B cell (primary cell): ENCODE measurements at regions of chr17 and their contacts with region 1.

Region 1: GRCh38 chr17:31541559-31541958 is 150.1 kb downstream of the RAB11FIP4 start:
- DNase-seq: no peak
- ATAC-seq: no peak
- H3K4me3 ChIP-seq: no peak overlapping the region
- H3K4me3 Mint-ChIP-seq: no peak overlapping the region
- H3K27ac ChIP-seq: no peak overlapping the region
- H3K27ac Mint-ChIP-seq: peak overlapping the region; percentile 74
- H3K4me1 ChIP-seq: peaks cover 42 to 48% of the 10 kb centered on the region in 2 donors
- H3K4me1 Mint-ChIP-seq: peaks cover 52% of the 10 kb centered on the region
- H3K27me3 ChIP-seq: no peaks in the 10 kb centered on the region
- H3K27me3 Mint-ChIP-seq: no peaks in the 10 kb centered on the region
- CTCF ChIP-seq: no peak

Region 2: DNA sequence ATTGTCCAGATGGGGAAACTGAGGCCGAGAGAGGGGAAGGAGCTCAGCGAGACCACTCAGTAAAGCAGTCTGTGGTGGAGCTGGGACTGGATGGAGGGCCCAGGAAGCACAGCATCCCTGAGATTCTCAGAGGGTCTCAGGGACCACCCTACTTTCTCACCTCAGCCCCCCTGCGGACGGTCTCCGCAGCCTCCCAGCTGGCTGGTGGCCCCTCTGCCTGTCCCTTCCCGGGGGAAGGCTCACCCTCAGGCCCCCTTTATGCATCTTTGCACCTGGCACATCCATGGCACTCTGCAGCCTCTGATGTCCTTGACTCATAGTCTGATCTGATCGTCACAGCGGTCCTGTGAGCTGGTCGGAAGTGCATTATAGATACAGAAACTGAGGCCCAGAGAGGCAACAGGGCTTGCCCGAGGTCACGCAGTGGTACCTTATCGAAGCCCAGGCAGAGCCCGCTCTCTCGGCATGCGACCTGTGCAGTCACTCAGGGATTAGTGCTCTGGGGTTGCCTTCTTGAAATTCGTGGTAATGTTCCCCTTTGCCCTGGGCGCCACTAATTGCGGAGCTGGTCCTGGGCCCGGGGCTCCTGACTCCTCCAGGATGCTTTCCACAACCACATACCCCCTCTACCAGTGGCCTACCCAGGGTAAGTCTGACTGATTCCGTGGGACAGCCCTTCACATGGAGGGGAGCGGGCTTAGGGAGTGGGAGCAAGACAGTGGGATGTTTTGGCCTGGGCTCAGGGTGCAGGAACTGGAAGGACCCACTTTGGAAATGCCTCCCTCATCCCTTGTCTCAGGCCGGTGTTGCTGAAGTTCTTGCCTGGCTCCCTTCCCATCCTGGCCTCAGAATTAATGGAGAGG is 125.7 kb before region 1 on chr17:
- CTCF ChIA-PET with region 1: no interaction called
- POLR2A ChIA-PET with region 1: interaction called, 11 read pairs
- intact Hi-C with region 1: no loop called
- DNase-seq: no peak
- ATAC-seq: no peak
- H3K4me3 ChIP-seq: no peak overlapping the region
- H3K4me3 Mint-ChIP-seq: no peak overlapping the region
- H3K27ac ChIP-seq: no peak overlapping the region
- H3K27ac Mint-ChIP-seq: no peak overlapping the region
- H3K4me1 ChIP-seq: peaks cover 9% of the 10 kb centered on the region in 2 donors
- H3K4me1 Mint-ChIP-seq: peaks cover 10% of the 10 kb centered on the region
- H3K27me3 ChIP-seq: no peaks in the 10 kb centered on the region
- H3K27me3 Mint-ChIP-seq: peaks cover 5% of the 10 kb centered on the region
- CTCF ChIP-seq: no peak

Region 3: GRCh38 chr17:31596382-31597323 is 55.1 kb after region 1 on chr17:
- CTCF ChIA-PET with region 1: no interaction called
- POLR2A ChIA-PET with region 1: no interaction called
- intact Hi-C with region 1: loop called (anchors 1 kb)
- DNase-seq: peak; percentile 73
- ATAC-seq: peak; percentile 99
- H3K4me3 ChIP-seq: no peak overlapping the region
- H3K4me3 Mint-ChIP-seq: peak overlapping the region; percentile 32
- H3K27ac ChIP-seq: peak overlapping the region; percentile 24 to 52
- H3K27ac Mint-ChIP-seq: peak overlapping the region; percentile 81
- H3K4me1 ChIP-seq: peaks cover 19 to 24% of the 10 kb centered on the region in 2 donors
- H3K4me1 Mint-ChIP-seq: peaks cover 34% of the 10 kb centered on the region
- H3K27me3 ChIP-seq: no peaks in the 10 kb centered on the region
- H3K27me3 Mint-ChIP-seq: no peaks in the 10 kb centered on the region
- CTCF ChIP-seq: no peak

Region 4: GRCh38 chr17:31738996-31739699 is 197.6 kb after region 1 on chr17:
- CTCF ChIA-PET with region 1: no interaction called
- POLR2A ChIA-PET with region 1: no interaction called
- intact Hi-C with region 1: no loop called
- DNase-seq: no peak
- ATAC-seq: no peak
- H3K4me3 ChIP-seq: no peak overlapping the region
- H3K4me3 Mint-ChIP-seq: no peak overlapping the region
- H3K27ac ChIP-seq: no peak overlapping the region
- H3K27ac Mint-ChIP-seq: no peak overlapping the region
- H3K4me1 ChIP-seq: no peaks in the 10 kb centered on the region
- H3K4me1 Mint-ChIP-seq: peaks cover 2% of the 10 kb centered on the region
- H3K27me3 ChIP-seq: peaks cover 0 to 5% (median 0%) of the 10 kb centered on the region in 4 experiments
- H3K27me3 Mint-ChIP-seq: peaks cover 30% of the 10 kb centered on the region
- CTCF ChIP-seq: no peak